ENCODE measurements at regions of chr5 and their contacts with region 1.

Region 1: DNA sequence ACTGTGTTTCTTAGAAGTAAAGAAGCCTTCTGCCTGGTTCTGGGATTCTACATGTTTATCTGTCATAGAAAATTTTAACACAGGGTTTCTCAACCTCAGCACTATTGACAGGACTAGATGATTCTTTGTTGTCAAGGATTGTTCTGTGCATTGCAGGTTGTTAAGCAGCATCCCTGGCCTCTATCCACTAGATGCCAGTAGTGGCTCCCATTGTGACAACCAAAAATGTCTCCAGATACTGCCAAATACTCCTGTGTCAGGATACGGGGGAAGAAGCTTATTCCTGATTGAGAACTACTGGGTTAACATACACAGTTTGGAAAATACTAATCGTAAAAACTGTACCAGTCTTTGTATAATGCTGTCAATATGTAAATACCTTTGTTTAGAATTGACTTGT is 167.1 kb downstream of the NIPBL start:
- DNase-seq: no peak
- H3K4me3 ChIP-seq: no peak overlapping the region
- H3K27ac ChIP-seq: no peak overlapping the region
- H3K4me1 ChIP-seq: no peaks in the 10 kb centered on the region
- H3K27me3 ChIP-seq: no peaks in the 10 kb centered on the region
- CTCF ChIP-seq: no peak

Region 2: GRCh38 chr5:36790838-36791237 is 252.8 kb before region 1 on chr5:
- intact Hi-C with region 1: no loop called
- DNase-seq: no peak
- H3K4me3 ChIP-seq: no peak overlapping the region
- H3K27ac ChIP-seq: no peak overlapping the region
- H3K4me1 ChIP-seq: no peaks in the 10 kb centered on the region
- H3K27me3 ChIP-seq: no peaks in the 10 kb centered on the region
- CTCF ChIP-seq: no peak

Region 3: GRCh38 chr5:37197340-37198050 is 153.8 kb after region 1 on chr5:
- intact Hi-C with region 1: loop called (anchors 10 kb)
- DNase-seq: no peak
- H3K4me3 ChIP-seq: no peak overlapping the region
- H3K27ac ChIP-seq: no peak overlapping the region
- H3K4me1 ChIP-seq: no peaks in the 10 kb centered on the region
- H3K27me3 ChIP-seq: no peaks in the 10 kb centered on the region
- CTCF ChIP-seq: no peak

Region 4: DNA sequence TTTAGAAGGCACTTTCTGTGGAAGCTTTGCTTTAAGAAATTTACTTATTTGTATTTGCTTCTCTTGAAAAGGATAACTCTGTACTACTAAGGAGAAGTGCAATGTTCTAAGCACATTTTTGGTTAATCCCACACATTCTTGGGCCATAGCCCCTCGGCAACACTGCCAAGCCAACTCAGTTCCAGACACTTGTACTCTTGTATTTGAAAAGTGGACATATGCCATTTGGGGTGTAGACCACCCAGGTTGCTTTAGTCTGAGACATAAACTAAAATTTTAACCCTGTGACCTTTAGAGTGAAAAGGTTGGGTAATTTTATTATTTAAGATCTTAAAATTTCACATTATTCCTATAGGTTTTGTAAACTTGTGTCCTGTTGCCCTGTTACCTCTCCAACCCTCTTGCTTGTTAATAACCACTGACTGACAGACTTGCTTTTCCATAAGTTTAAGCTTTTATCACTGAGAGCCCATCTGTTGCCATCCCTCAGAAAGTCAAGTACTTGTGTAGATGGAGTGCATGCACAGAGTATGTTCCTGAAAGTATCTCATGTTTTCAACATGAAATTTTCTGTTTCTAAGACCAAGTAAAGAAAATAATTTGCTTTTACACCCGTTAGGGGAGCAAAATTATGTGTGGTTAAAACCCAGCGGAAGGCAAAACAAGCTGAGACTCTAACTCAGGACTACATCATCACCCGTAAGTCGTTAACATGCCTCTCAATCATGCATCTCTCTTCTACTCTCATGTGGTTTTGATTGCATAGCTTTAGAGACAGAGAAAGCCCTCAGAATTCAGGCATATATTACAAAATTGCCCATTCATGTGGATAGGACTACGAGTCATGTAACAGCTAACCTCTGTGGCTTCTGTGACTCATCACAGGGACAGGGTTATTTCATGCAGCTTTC is 678.8 kb after region 1 on chr5:
- intact Hi-C with region 1: no loop called
- DNase-seq: no peak
- H3K4me3 ChIP-seq: no peak overlapping the region
- H3K27ac ChIP-seq: no peak overlapping the region
- H3K4me1 ChIP-seq: peaks cover 0 to 15% (median 11%) of the 10 kb centered on the region in 4 donors
- H3K27me3 ChIP-seq: no peaks in the 10 kb centered on the region
- CTCF ChIP-seq: no peak